Panc1 (cell line): ENCODE measurements at regions of chr22 and their contacts with region 1.

Region 1: GRCh38 chr22:19723983-19724827 is 866 bp downstream of the GP1BB start:
- DNase-seq: no peak
- ATAC-seq: peak; percentile 85
- H3K4me3 ChIP-seq: peak overlapping the region; percentile 11 to 26; a peak in 1 of 4 replicates
- H3K27ac ChIP-seq: no peak overlapping the region
- H3K4me1 ChIP-seq: 0 out of 2 replicates have a peak, but pooled peaks cover 3% of the 10 kb centered on the region
- H3K27me3 ChIP-seq: no peaks in the 10 kb centered on the region
- CTCF ChIP-seq: peak; percentile 83

Region 2: DNA sequence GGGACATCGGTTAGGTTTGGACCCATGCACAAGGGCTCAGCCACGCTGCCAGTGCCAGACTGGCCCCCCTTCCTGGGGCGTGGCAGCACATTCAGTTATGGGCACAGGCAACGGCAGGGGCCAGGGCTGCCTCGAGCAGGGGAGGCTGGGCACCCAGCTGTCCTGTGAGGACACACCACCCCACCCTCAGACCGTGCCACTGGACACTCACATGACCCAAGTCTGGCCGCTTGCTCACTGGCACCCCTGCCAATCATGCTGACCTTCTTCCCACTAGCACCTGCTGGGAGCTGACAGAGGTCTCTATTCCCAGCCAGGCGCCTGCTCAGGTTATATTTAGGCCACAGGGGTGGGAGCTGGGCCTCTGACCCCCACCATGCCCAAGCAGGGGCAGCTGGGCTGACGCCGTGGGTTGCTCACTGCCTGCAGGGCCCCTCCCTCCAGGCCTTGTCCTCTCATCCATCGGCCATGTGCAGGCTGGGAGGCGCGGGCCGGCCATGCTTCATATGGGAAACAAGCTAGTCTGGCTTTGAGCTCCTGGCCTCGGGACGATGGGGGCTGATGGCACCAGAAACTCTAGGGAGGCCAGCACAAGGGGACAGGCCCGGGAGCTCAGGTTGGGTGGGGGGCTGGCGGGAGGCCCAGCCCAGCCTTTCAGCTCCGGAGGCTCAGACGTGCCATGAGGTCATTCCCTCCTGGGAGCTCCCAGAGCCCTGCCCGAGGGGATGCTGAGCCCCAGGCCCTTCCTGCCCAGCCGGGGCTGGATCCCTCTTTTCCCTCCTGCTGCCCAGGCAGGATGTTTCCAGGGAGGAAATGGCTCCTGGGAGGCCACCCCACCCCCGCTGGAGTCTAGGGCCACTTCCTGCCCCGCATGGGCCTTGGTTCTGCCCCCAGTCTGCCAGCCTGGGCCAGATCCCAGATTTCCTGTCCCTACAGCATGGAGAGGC is 21.2 kb after region 1 on chr22:
- CTCF ChIA-PET with region 1: no interaction called
- POLR2A ChIA-PET with region 1: no interaction called
- in situ Hi-C with region 1: no loop called
- intact Hi-C with region 1: no loop called
- DNase-seq: no peak
- ATAC-seq: no peak
- H3K4me3 ChIP-seq: no peak overlapping the region
- H3K27ac ChIP-seq: no peak overlapping the region
- H3K4me1 ChIP-seq: peaks cover 2% of the 10 kb centered on the region; the same call in 1 of the 2 replicates
- H3K27me3 ChIP-seq: no peaks in the 10 kb centered on the region
- CTCF ChIP-seq: no peak

Region 3: GRCh38 chr22:19959043-19959586 is 234.9 kb after region 1 on chr22:
- CTCF ChIA-PET with region 1: interaction called, 11 read pairs
- POLR2A ChIA-PET with region 1: no interaction called
- in situ Hi-C with region 1: no loop called
- intact Hi-C with region 1: no loop called
- DNase-seq: no peak
- ATAC-seq: peak; percentile 44
- H3K4me3 ChIP-seq: peak overlapping the region in 1 of 2 experiments; percentile 23; a peak in 2 of 4 replicates
- H3K27ac ChIP-seq: no peak overlapping the region
- H3K4me1 ChIP-seq: peaks cover 6% of the 10 kb centered on the region
- H3K27me3 ChIP-seq: no peaks in the 10 kb centered on the region
- CTCF ChIP-seq: no peak